Posterior vena cava (tissue), 2 donors: ENCODE measurements at regions of chr7 and their contacts with region 1.

Region 1: DNA sequence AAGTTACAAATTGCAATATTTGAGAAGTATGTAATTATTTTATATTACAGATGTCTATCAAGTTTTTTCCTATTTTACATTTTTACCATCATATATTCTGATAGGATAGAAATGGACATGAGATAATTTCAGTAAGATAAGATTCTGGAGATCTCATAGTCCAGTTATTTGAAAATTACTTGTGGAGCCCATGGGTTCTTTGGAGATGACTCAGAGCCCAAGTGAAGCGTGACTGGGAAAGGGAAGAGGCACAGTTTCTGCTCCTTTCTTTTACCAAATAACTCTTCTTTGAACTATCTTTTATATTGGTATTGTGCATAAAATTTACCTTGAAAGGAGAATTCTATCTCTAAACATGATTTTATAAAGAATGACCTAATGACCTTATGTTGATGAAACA is 2.4 kb downstream of the CD36 start:
- DNase-seq: no peak

Region 2: GRCh38 chr7:80439894-80440821 is 200.7 kb before region 1 on chr7:
- intact Hi-C with region 1: loop called in 1 of 2 experiments (anchors 10 kb)
- DNase-seq: no peak